Posterior cingulate gyrus (tissue), 11 donors: ENCODE measurements at regions of chr3 and their contacts with region 1.

Region 1: DNA sequence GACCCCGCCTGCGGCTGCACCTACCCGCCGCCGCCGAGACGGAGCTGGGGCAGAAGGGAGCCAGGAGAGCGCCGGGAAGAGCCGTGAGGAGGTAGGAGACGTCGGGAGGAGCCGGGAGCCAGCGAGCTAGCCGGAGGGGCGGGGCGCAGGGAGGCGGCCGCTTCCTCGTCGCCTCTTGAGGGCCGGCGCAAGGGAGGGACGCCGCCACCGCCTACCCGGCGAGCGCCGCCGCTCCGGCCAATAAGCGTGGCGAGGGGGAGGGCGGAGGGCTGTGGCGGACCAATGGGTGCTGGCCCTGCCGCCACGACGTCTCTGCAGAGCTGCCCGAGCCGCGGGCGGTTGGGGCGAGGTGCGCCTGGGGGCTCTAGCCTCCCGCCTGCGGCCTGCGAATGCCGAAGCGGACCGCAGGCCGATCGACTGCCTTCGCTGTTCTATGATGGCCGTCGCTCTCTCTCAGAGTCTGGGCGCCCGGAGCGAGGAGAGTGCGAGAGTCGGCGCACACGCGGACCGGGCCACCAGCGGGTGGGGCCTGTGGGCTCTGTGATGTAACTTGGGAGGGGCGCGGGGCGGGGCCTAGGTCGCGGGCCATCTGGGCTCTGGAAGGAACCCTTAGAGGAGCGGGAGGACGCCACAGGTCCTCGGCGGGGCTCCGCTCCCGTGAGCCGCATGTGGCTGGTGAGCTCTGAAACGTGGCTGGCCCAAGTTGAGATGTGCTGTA is 72.7 kb upstream of the MAP4 start:
- DNase-seq: peak; percentile 90 to 99 (median 96)

Region 2: DNA sequence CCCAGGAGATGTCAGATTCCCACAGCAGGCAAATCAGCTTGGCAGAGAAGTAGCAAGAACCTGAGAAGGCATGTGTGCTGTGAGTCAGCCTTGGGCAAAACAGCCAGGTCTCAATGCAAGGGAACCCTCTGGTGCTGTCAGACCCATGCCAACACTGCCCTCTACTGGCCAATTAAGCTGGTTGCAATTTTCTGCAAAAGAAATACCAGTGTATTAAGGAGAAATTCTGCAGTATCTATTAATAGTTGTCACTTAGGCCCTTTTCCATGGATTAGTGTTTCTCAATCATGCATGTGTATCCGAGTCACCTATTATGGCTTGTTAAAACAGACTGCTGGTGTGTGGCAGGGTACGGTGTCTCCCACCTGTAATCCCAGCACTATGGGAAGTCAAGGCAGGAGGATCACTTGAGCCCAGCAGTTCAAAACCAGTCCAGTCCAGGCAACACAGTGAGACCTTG is 98.9 kb before region 1 on chr3:
- intact Hi-C with region 1: loop called (anchors 2 kb)
- DNase-seq: peak; percentile 54 to 96 (median 74)

Region 3: DNA sequence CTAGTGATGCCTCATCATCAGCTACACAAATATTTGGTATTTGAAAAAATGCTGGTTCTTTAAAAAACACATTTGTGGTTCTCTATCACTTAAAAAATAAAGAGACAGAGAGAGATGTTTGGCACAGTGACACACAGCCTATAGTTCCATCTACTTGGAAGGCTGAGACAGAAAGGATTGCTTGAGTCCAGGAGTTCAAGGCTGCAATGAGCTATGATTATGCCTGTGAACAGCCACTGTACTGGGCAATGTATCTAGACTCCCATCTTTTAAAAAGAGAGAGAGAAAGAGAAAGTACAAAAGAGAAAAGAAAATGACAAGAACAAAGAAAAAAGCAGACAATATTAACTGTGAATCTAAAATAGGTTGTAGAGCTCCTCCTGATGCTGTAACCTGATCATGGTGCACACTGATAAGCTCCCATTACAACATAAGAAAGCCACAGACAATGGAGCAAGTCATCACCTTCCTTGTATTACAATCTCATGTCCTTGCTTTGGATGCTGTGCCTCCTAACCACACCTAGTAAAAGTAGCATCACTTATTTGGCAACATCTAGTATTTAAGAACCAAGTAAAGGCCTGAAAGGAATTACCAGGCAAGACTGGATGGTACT is 41.0 kb before region 1 on chr3:
- intact Hi-C with region 1: loop called (anchors 5 kb)
- DNase-seq: no peak

Region 4: GRCh38 chr3:48564017-48564416 is 475.1 kb after region 1 on chr3:
- intact Hi-C with region 1: no loop called
- DNase-seq: peak in 6 of 10 donors; percentile 44 to 96 (median 68)